ENCODE measurements at regions of chr6 and their contacts with region 1.

Region 1: GRCh38 chr6:53326372-53327016 is 22.3 kb downstream of the ELOVL5 start:
- DNase-seq: peak; percentile 97
- H3K4me3 Mint-ChIP-seq: peak overlapping the region; percentile 61
- H3K27ac Mint-ChIP-seq: peak overlapping the region; percentile 79
- H3K4me1 Mint-ChIP-seq: peaks cover 60% of the 10 kb centered on the region
- H3K27me3 Mint-ChIP-seq: no peaks in the 10 kb centered on the region
- CTCF ChIP-seq: no peak

Region 2: GRCh38 chr6:53300656-53301551 is 25.6 kb before region 1 on chr6:
- CTCF ChIA-PET with region 1: interaction called, 3 read pairs
- POLR2A ChIA-PET with region 1: interaction called, 22 read pairs
- intact Hi-C with region 1: no loop called
- DNase-seq: no peak
- H3K4me3 Mint-ChIP-seq: no peak overlapping the region
- H3K27ac Mint-ChIP-seq: peak overlapping the region; percentile 89
- H3K4me1 Mint-ChIP-seq: peaks cover 34% of the 10 kb centered on the region
- H3K27me3 Mint-ChIP-seq: no peaks in the 10 kb centered on the region
- CTCF ChIP-seq: no peak

Region 3: GRCh38 chr6:53309059-53309900 is 17.2 kb before region 1 on chr6:
- CTCF ChIA-PET with region 1: interaction called, 6 read pairs
- POLR2A ChIA-PET with region 1: interaction called, 44 read pairs
- intact Hi-C with region 1: loop called (anchors 2 kb)
- DNase-seq: peak; percentile 77
- H3K4me3 Mint-ChIP-seq: peak overlapping the region; percentile 32
- H3K27ac Mint-ChIP-seq: peak overlapping the region; percentile 64
- H3K4me1 Mint-ChIP-seq: peaks cover 45% of the 10 kb centered on the region
- H3K27me3 Mint-ChIP-seq: no peaks in the 10 kb centered on the region
- CTCF ChIP-seq: no peak

Region 4: GRCh38 chr6:53359072-53359842 is 32.8 kb after region 1 on chr6:
- CTCF ChIA-PET with region 1: interaction called, 4 read pairs
- POLR2A ChIA-PET with region 1: interaction called, 6 read pairs
- intact Hi-C with region 1: loop called (anchors 1 kb)
- DNase-seq: peak; percentile 95
- H3K4me3 Mint-ChIP-seq: peak overlapping the region; percentile 77
- H3K27ac Mint-ChIP-seq: peak overlapping the region; percentile 91
- H3K4me1 Mint-ChIP-seq: peaks cover 37% of the 10 kb centered on the region
- H3K27me3 Mint-ChIP-seq: no peaks in the 10 kb centered on the region
- CTCF ChIP-seq: no peak

Measured in MCF 10A (cell line).